GM13977 (cell line): ENCODE measurements at regions of chr14 and their contacts with region 1.

Region 1: GRCh38 chr14:24332268-24332993 is 2.4 kb downstream of the ADCY4 start:
- DNase-seq: peak; percentile 94
- CTCF ChIP-seq: peak; percentile 75

Region 2: DNA sequence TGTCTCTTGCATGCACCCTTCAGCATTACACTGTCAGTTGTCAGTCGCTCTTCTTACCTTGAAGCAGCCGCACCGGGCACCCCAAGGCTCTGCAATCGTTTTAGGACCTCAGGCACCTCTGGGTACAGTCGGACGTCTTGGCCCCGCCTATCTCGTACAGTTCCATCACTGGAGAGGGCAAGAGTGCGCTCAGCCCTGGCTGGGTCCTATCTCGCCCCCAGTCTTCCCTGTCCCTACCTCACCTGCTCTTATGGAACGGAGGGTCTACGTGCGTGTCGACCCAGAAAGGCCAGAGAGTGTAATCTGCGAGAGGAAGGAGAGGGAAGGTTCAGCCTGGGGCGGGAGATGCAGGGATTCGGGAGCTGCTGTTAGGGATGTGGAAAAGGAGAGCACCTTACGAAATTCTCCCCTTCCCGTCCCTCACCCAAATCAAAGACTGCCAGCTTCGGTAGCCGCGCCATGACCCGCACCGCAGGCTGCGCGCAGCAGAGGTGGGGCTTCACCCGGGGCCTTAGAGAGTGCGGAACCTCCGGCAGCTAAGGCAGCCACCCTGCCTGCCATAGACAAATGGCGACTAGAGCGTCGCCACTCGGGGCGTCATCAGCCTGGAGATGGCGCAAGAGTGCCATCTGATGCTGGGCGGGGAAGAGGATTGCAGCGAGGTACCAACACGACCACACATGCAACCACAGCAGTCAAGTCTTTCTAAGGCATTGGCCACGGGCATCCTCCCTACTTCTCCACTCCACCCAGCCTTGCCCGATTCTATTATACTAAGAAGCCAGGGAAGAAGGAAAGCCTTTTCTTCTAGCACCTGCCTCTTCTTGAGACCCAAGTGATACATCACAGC is 116.7 kb before region 1 on chr14 and contains the start of gene MDP1:
- in situ Hi-C with region 1: no loop called
- DNase-seq: peak; percentile 88
- CTCF ChIP-seq: peak; percentile 92

Region 3: GRCh38 chr14:24436355-24437019 is 104.1 kb after region 1 on chr14:
- in situ Hi-C with region 1: loop called (anchors 5 kb)
- DNase-seq: peak; percentile 76
- CTCF ChIP-seq: peak; percentile 75

Region 4: DNA sequence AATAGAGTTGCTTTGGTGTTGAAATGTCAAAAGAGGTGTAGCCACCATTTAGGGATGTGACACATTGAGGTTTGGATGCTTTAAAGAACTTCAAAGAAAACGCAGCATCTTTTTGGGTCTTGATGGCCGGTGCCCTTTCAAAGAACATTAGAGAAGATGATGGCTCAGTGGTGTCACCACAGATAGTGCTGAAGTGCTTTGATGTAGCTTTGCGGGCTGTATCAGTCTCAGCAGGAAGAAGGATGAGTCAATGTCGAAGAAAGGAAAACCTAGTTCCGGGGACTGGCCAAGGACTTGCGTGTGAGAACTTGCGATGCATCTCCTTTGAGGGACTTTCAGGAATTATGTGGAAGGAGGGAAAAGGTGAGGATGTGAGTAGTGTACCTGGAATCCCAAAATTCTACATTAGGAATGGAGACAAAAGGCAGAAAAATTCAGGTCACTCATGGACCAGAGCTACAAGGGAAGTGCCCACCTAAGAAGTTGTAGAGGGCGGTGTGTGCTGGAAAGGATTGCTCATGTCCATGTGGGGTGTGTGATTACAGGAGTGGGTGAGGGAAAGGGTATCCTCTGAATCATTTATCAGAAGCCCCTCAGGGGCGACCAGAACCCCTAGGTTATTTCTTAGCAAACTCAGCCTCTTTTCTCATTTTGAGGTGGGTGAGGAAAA is 341.2 kb after region 1 on chr14:
- in situ Hi-C with region 1: loop called (anchors 25 kb)
- DNase-seq: no peak
- CTCF ChIP-seq: no peak